B cell (primary cell): ENCODE measurements at regions of chr18 and their contacts with region 1.

Region 1: GRCh38 chr18:9136315-9137155 is at the start of gene ANKRD12:
- DNase-seq: peak; percentile 99
- ATAC-seq: peak; percentile 73
- H3K4me3 ChIP-seq: peak within 1 kb of the TSS; percentile 66 to 98 (median 89)
- H3K4me3 Mint-ChIP-seq: peak within 1 kb of the TSS; percentile 99
- H3K27ac ChIP-seq: peak within 1 kb of the TSS; percentile 97 to 99
- H3K27ac Mint-ChIP-seq: peak within 1 kb of the TSS; percentile 99
- H3K4me1 ChIP-seq: peaks cover 41 to 44% of the 10 kb centered on the region in 2 donors
- H3K4me1 Mint-ChIP-seq: peaks cover 53% of the 10 kb centered on the region
- H3K27me3 ChIP-seq: no peaks in the 10 kb centered on the region
- H3K27me3 Mint-ChIP-seq: no peaks in the 10 kb centered on the region
- CTCF ChIP-seq: no peak
- total RNA-seq, gene ANKRD12: 183 and 192 TPM in 2 replicates

Region 2: DNA sequence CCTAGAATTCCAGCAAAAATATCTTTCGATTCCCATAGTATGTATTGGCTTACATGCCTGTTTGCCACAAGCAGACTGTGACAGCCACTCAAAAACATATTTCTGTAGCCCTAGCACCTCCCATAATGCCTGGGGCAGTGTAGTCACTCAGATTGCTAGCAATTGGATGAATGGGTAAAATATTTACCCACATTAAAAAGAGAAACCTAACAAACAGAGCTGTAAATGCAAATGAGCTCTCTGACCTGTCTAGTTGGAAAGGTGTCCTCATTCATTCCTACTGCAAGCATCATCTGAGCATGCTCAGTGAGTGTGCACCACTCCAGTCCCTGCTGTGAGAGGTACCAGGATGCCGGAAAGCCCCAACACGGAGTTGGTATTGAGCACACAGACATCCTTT is 761.3 kb before region 1 on chr18:
- CTCF ChIA-PET with region 1: no interaction called
- POLR2A ChIA-PET with region 1: no interaction called
- intact Hi-C with region 1: no loop called
- DNase-seq: no peak
- ATAC-seq: no peak
- H3K4me3 ChIP-seq: no peak overlapping the region
- H3K4me3 Mint-ChIP-seq: no peak overlapping the region
- H3K27ac ChIP-seq: no peak overlapping the region
- H3K27ac Mint-ChIP-seq: no peak overlapping the region
- H3K4me1 ChIP-seq: no peaks in the 10 kb centered on the region
- H3K4me1 Mint-ChIP-seq: no peaks in the 10 kb centered on the region
- H3K27me3 ChIP-seq: peaks cover 0 to 6% (median 0%) of the 10 kb centered on the region in 4 experiments
- H3K27me3 Mint-ChIP-seq: peaks cover 9% of the 10 kb centered on the region
- CTCF ChIP-seq: no peak

Region 3: GRCh38 chr18:8615397-8616027 is 521.0 kb before region 1 on chr18:
- CTCF ChIA-PET with region 1: no interaction called
- POLR2A ChIA-PET with region 1: no interaction called
- intact Hi-C with region 1: no loop called
- DNase-seq: no peak
- ATAC-seq: no peak
- H3K4me3 ChIP-seq: no peak overlapping the region
- H3K4me3 Mint-ChIP-seq: no peak overlapping the region
- H3K27ac ChIP-seq: no peak overlapping the region
- H3K27ac Mint-ChIP-seq: no peak overlapping the region
- H3K4me1 ChIP-seq: peaks cover 43 to 47% of the 10 kb centered on the region in 2 donors
- H3K4me1 Mint-ChIP-seq: peaks cover 82% of the 10 kb centered on the region
- H3K27me3 ChIP-seq: no peaks in the 10 kb centered on the region
- H3K27me3 Mint-ChIP-seq: no peaks in the 10 kb centered on the region
- CTCF ChIP-seq: no peak

Region 4: GRCh38 chr18:9102508-9103375 is 33.8 kb before region 1 on chr18 and contains the start of gene NDUFV2:
- CTCF ChIA-PET with region 1: interaction called, 14 read pairs
- POLR2A ChIA-PET with region 1: interaction called, 59 read pairs
- intact Hi-C with region 1: loop called (anchors 1 kb)
- DNase-seq: peak; percentile 96
- ATAC-seq: peak; percentile 96
- H3K4me3 ChIP-seq: peak within 1 kb of the TSS; percentile 77 to 98 (median 88)
- H3K4me3 Mint-ChIP-seq: peak within 1 kb of the TSS; percentile 95
- H3K27ac ChIP-seq: peak within 1 kb of the TSS; percentile 80 to 86
- H3K27ac Mint-ChIP-seq: peak within 1 kb of the TSS; percentile 93
- H3K4me1 ChIP-seq: peaks cover 43 to 50% of the 10 kb centered on the region in 2 donors
- H3K4me1 Mint-ChIP-seq: peaks cover 54% of the 10 kb centered on the region
- H3K27me3 ChIP-seq: no peaks in the 10 kb centered on the region
- H3K27me3 Mint-ChIP-seq: no peaks in the 10 kb centered on the region
- CTCF ChIP-seq: no peak
- total RNA-seq, gene NDUFV2: 135 and 137 TPM in 2 replicates

Region 5: GRCh38 chr18:9109523-9109922 is 27.0 kb before region 1 on chr18:
- CTCF ChIA-PET with region 1: interaction called, 7 read pairs
- POLR2A ChIA-PET with region 1: interaction called, 59 read pairs
- intact Hi-C with region 1: no loop called
- DNase-seq: no peak
- ATAC-seq: no peak
- H3K4me3 ChIP-seq: no peak overlapping the region
- H3K4me3 Mint-ChIP-seq: peak overlapping the region; percentile 31
- H3K27ac ChIP-seq: peak overlapping the region; percentile 11 to 99
- H3K27ac Mint-ChIP-seq: peak overlapping the region; percentile 84
- H3K4me1 ChIP-seq: peaks cover 81 to 94% of the 10 kb centered on the region in 2 donors
- H3K4me1 Mint-ChIP-seq: peaks cover 83% of the 10 kb centered on the region
- H3K27me3 ChIP-seq: no peaks in the 10 kb centered on the region
- H3K27me3 Mint-ChIP-seq: no peaks in the 10 kb centered on the region
- CTCF ChIP-seq: no peak

Region 6: GRCh38 chr18:9117980-9118841 is 18.3 kb before region 1 on chr18:
- CTCF ChIA-PET with region 1: interaction called, 23 read pairs
- POLR2A ChIA-PET with region 1: interaction called, 57 read pairs
- intact Hi-C with region 1: loop called (anchors 1 kb)
- DNase-seq: peak; percentile 59
- ATAC-seq: peak; percentile 26
- H3K4me3 ChIP-seq: peak overlapping the region in 2 of 5 experiments; percentile 3 to 66
- H3K4me3 Mint-ChIP-seq: peak overlapping the region; percentile 88
- H3K27ac ChIP-seq: peak overlapping the region; percentile 82 to 99
- H3K27ac Mint-ChIP-seq: peak overlapping the region; percentile 98
- H3K4me1 ChIP-seq: peaks cover 56 to 86% of the 10 kb centered on the region in 2 donors
- H3K4me1 Mint-ChIP-seq: peaks cover 70% of the 10 kb centered on the region
- H3K27me3 ChIP-seq: no peaks in the 10 kb centered on the region
- H3K27me3 Mint-ChIP-seq: no peaks in the 10 kb centered on the region
- CTCF ChIP-seq: no peak

Region 7: DNA sequence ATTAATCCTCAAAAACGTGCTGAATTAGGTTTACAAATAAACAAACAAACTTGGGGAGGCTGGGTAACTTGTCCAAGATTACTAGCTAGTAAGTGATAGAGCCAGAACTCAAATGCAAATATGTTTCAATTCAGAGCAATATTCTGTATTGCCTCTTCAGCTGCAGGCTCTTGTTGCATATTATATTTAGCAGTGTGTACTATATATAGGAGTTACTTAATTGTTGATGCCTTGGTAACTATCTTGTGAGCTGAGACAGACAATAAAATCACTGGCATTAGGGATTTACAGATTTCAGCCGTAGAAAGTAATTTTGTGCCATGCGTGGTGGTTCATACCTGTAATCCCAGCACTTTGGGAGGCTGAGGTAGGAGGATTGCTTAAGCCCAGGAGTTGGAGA is 10.2 kb before region 1 on chr18:
- CTCF ChIA-PET with region 1: interaction called, 7 read pairs
- POLR2A ChIA-PET with region 1: interaction called, 10 read pairs
- intact Hi-C with region 1: no loop called
- DNase-seq: no peak
- ATAC-seq: no peak
- H3K4me3 ChIP-seq: no peak overlapping the region
- H3K4me3 Mint-ChIP-seq: no peak overlapping the region
- H3K27ac ChIP-seq: no peak overlapping the region
- H3K27ac Mint-ChIP-seq: no peak overlapping the region
- H3K4me1 ChIP-seq: peaks cover under 1 to 6% of the 10 kb centered on the region in 2 donors
- H3K4me1 Mint-ChIP-seq: peaks cover 15% of the 10 kb centered on the region
- H3K27me3 ChIP-seq: no peaks in the 10 kb centered on the region
- H3K27me3 Mint-ChIP-seq: no peaks in the 10 kb centered on the region
- CTCF ChIP-seq: no peak

Region 8: DNA sequence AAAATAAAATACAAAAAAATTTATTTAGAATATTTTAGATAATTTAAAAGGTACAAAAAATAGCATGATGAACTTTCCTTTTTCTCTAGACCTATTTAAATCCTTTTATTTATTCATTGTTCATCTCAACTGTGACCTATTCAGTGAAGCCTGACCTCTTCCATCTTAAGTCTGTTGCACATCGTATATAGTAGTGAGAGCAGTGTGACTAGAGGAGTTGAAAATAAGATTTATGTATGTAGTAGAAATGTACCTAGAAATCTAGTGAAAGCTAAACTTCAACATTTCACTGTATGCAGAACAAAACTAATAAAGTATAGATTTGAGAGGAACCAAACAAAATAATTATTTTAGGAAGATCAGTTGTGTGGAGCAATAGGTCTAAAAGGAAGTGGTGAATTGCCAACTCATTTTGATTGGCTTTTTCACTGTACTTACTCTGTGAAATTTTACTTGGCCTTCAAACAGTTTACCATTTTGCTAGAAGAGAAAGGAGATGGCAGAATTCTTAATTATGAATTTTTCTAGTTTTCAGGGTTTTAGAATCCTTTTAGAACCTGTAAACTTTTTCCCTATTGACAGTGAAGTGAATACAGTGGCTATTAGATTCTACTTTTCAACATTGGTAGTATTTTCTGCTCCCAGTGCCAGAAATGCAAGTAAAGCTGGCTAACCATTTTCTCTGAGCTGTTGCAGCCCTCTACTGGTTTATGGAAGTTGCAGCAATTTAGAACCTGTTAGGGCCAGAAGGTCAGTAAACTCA is 11.1 kb after region 1 on chr18:
- CTCF ChIA-PET with region 1: interaction called, 6 read pairs
- POLR2A ChIA-PET with region 1: interaction called, 8 read pairs
- intact Hi-C with region 1: loop called (anchors 1 kb)
- DNase-seq: peak; percentile 72
- ATAC-seq: peak; percentile 60
- H3K4me3 ChIP-seq: no peak overlapping the region
- H3K4me3 Mint-ChIP-seq: peak overlapping the region; percentile 58
- H3K27ac ChIP-seq: peak overlapping the region; percentile 35 to 48
- H3K27ac Mint-ChIP-seq: peak overlapping the region; percentile 74
- H3K4me1 ChIP-seq: peaks cover 63 to 68% of the 10 kb centered on the region in 2 donors
- H3K4me1 Mint-ChIP-seq: peaks cover 72% of the 10 kb centered on the region
- H3K27me3 ChIP-seq: no peaks in the 10 kb centered on the region
- H3K27me3 Mint-ChIP-seq: no peaks in the 10 kb centered on the region
- CTCF ChIP-seq: peak; percentile 76

Region 9: GRCh38 chr18:9334329-9334972 is 197.9 kb after region 1 on chr18 and contains the start of gene TWSG1:
- CTCF ChIA-PET with region 1: no interaction called
- POLR2A ChIA-PET with region 1: interaction called, 5 read pairs
- intact Hi-C with region 1: loop called (anchors 1 kb)
- DNase-seq: peak; percentile 94
- ATAC-seq: peak; percentile 93
- H3K4me3 ChIP-seq: peak within 1 kb of the TSS; percentile 59 to 88 (median 71)
- H3K4me3 Mint-ChIP-seq: peak within 1 kb of the TSS; percentile 95
- H3K27ac ChIP-seq: peak within 1 kb of the TSS in 1 of 2 donors; percentile 65
- H3K27ac Mint-ChIP-seq: peak within 1 kb of the TSS; percentile 82
- H3K4me1 ChIP-seq: peaks cover 6 to 19% of the 10 kb centered on the region in 2 donors
- H3K4me1 Mint-ChIP-seq: peaks cover 20% of the 10 kb centered on the region
- H3K27me3 ChIP-seq: peaks cover 0 to 2% (median 0%) of the 10 kb centered on the region in 4 experiments
- H3K27me3 Mint-ChIP-seq: peaks cover 3% of the 10 kb centered on the region
- CTCF ChIP-seq: peak; percentile 44
- total RNA-seq, gene TWSG1: 5.5 and 6.3 TPM in 2 replicates